Caco-2 (cell line): ENCODE measurements at regions of chr3 and their contacts with region 1.

Region 1: DNA sequence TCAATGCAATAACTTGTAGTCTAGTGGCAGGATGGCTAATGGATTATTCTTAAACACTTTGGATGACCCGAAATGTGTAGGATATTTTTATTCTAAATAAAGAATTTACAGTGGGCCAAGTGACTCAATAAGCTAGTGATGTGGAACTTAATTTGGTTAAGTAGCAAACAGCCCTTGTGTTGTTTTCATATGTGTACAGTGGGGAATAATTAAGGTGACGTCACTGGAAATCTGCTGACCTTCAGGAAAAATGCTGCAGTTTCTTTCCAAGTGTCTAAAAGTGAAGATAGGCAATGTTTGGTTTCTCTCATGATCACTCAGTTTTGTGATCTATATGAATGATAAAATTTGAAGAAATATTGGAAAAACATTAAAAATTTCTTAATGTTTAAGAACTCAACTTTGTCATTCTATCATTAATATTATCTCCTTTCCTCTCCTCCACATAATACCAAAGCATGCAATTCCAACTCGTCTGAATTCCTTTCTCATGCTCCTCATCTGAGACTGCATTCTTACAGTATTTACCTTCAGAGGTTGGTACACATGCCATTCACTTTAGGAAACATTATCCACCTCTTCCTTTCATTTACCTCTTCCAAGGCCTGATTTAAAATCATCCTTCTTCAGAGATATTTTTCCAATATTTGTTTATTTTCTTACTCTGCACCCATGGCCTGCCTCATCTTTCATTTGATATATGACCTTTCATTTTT is 414.6 kb upstream of the ARPP21 start:
- DNase-seq: peak in 1 of 2 experiments; percentile 8
- H3K4me3 ChIP-seq: no peak overlapping the region
- H3K4me3 Mint-ChIP-seq: peak overlapping the region; percentile 6
- H3K27ac Mint-ChIP-seq: peak overlapping the region; percentile 53
- H3K4me1 ChIP-seq: peaks cover 27% of the 10 kb centered on the region
- H3K4me1 Mint-ChIP-seq: peaks cover 12% of the 10 kb centered on the region
- H3K27me3 ChIP-seq: no peaks in the 10 kb centered on the region
- H3K27me3 Mint-ChIP-seq: no peaks in the 10 kb centered on the region
- CTCF ChIP-seq: no peak

Region 2: DNA sequence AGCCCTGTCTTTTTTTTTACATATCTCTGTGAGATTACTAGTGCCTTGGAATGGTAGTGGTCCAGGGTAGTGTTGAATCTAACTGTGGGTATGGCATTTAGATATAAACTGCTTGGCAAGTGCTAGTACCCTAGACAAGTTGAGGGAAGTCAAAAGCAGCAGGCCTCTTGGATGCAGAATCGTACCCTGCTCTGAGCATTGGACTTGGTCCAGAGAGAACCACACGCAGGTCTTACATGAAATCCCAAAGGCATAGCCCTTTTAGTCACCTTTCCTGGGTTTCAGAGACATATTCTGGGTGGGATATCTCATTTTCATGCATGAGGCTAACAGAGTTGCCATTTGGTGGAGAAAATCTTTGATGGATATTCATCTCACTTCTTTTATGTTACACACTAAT is 784.9 kb before region 1 on chr3:
- CTCF ChIA-PET with region 1: no interaction called
- POLR2A ChIA-PET with region 1: no interaction called
- intact Hi-C with region 1: no loop called
- DNase-seq: no peak
- H3K4me3 ChIP-seq: no peak overlapping the region
- H3K4me3 Mint-ChIP-seq: no peak overlapping the region
- H3K27ac Mint-ChIP-seq: no peak overlapping the region
- H3K4me1 ChIP-seq: no peaks in the 10 kb centered on the region
- H3K4me1 Mint-ChIP-seq: no peaks in the 10 kb centered on the region
- H3K27me3 ChIP-seq: no peaks in the 10 kb centered on the region
- H3K27me3 Mint-ChIP-seq: no peaks in the 10 kb centered on the region
- CTCF ChIP-seq: no peak

Region 3: DNA sequence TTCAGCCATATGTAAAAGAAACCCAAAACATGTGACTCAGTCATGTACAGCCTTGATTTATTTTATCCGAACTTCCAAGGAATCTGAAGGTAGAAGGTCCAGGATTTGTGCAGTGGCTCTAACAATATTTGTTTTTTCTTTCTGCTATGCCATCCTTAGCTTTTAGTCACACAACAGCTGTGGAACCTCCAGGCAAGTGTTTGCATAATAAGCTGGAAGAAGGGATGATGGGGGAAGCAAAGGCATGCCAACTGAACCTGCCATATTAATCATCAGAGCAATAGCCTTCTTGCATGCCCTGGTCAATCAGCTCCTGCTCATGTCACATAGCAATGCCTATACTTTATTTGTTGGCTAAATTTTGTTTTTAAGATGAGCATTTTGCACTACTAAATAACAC is 30.1 kb before region 1 on chr3:
- CTCF ChIA-PET with region 1: no interaction called
- POLR2A ChIA-PET with region 1: no interaction called
- intact Hi-C with region 1: loop called (anchors 2 kb)
- DNase-seq: no peak
- H3K4me3 ChIP-seq: no peak overlapping the region
- H3K4me3 Mint-ChIP-seq: no peak overlapping the region
- H3K27ac Mint-ChIP-seq: no peak overlapping the region
- H3K4me1 ChIP-seq: no peaks in the 10 kb centered on the region
- H3K4me1 Mint-ChIP-seq: peaks cover 6% of the 10 kb centered on the region
- H3K27me3 ChIP-seq: no peaks in the 10 kb centered on the region
- H3K27me3 Mint-ChIP-seq: no peaks in the 10 kb centered on the region
- CTCF ChIP-seq: no peak

Region 4: DNA sequence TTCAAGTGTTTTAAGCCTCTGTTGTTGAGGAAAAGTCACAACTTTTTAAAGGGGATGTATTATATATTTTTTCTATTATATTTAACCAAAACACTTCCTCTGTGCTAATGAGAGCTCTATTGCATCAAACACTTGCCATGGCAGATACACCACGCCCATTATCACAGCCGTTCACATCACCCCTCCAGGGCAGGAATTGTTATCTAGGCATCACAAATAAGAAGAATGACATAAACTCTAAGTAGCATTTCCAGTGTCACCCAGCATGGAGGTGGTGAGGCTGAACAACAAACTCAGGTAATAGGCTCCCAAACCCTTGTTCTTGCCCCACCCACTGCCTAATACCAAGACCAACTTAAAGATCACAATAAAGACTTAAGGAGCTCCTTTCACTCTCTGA is 20.3 kb after region 1 on chr3:
- CTCF ChIA-PET with region 1: no interaction called
- POLR2A ChIA-PET with region 1: no interaction called
- intact Hi-C with region 1: loop called (anchors 2 kb)
- DNase-seq: no peak
- H3K4me3 ChIP-seq: no peak overlapping the region
- H3K4me3 Mint-ChIP-seq: no peak overlapping the region
- H3K27ac Mint-ChIP-seq: no peak overlapping the region
- H3K4me1 ChIP-seq: peaks cover 9% of the 10 kb centered on the region; the same call in 1 of the 2 replicates
- H3K4me1 Mint-ChIP-seq: peaks cover 6% of the 10 kb centered on the region
- H3K27me3 ChIP-seq: no peaks in the 10 kb centered on the region
- H3K27me3 Mint-ChIP-seq: no peaks in the 10 kb centered on the region
- CTCF ChIP-seq: no peak

Region 5: DNA sequence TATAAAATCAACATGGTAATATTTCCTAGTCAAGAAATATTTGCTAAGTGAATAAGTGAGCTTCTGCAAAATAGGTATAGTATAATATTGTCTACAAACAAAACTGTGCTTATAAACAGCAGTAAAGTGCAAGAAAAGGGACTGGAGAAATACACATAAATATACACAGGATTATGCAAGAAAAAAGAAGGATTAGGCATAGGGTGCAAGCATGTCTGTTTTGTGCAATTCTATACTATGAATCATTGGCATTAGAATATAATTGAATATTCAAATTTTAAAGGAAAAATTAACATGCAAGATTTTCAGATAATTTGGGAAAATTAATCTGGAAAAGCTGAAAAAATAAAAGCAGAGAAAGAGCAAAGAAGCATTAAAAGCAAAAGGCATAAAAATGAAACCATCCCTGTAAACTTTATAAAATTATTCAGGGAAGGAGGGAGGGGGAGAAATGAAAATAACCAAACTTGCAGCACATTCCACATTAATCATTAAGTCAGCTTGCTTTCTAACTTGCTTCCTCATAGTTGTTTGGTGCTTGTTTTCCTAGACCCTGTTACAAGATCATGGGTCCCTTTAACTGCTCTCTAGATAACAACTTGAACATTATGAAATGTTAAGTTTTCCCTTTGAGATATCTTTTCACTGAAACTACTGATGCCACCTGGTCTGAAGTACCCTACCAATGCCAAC is 1008.2 kb after region 1 on chr3:
- CTCF ChIA-PET with region 1: no interaction called
- POLR2A ChIA-PET with region 1: no interaction called
- intact Hi-C with region 1: no loop called
- DNase-seq: no peak
- H3K4me3 ChIP-seq: no peak overlapping the region
- H3K4me3 Mint-ChIP-seq: no peak overlapping the region
- H3K27ac Mint-ChIP-seq: no peak overlapping the region
- H3K4me1 ChIP-seq: no peaks in the 10 kb centered on the region
- H3K4me1 Mint-ChIP-seq: no peaks in the 10 kb centered on the region
- H3K27me3 ChIP-seq: no peaks in the 10 kb centered on the region
- H3K27me3 Mint-ChIP-seq: peaks cover 6% of the 10 kb centered on the region
- CTCF ChIP-seq: no peak